Vagina (tissue), 2 donors: ENCODE measurements at regions of chr9 and their contacts with region 1.

Region 1: DNA sequence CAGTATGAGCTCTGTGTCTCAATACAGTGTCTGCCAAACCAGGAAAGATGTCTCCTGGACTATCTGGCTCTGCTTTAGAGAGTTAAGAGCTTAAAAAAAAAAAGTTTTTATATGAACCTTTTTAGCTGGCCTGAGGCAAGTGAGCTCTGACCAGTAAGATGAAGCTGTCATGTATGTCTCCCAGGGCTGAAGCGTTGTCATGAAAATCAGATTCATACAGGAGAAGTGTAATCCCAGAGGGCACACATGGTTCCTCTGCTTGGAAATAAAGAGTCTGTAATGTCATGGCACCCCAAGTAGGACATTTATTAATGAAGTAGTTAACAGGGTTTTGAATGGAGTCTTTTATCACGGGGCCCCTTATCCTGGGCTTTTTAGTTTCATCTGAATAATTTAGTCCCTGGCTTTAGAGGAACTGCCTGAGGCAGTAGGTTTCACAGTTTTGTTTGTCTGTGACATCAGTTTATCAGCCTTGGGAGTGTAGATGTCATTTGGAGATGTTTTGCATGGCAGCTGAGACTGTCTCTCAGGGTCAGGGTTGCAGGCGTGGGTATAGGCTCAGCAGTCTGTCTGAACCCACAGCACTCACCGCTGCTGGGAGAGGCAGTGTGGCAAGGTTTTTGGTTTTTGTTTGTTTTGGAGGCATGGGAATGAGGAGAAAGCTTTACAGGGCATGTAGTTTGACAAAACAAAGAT is 223.3 kb downstream of the DIRAS2 start:
- DNase-seq: no peak
- H3K4me3 ChIP-seq: no peak overlapping the region
- H3K27ac ChIP-seq: no peak overlapping the region
- H3K4me1 ChIP-seq: no peaks in the 10 kb centered on the region
- H3K27me3 ChIP-seq: no peaks in the 10 kb centered on the region
- CTCF ChIP-seq: no peak
- POLR2A ChIP-seq: no peak

Region 2: DNA sequence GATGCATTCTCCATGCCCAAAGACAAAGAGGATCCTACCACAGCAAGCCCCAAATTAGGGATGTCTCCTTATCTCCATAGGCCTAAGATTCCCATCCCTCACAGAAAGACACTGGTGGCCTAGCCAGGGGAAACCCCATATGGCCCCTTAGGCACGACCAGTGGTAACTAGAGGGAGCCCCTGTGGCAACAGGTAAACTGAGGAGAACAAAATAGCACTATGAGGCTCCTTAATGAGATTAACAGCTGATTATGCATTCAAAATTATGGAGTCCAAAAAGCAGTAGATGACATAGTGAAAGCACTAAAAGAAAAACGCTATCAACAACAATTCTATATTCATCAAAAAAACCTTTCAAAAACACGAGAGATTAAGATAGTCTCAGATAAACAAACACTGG is 10.7 kb before region 1 on chr9:
- intact Hi-C with region 1: loop called (anchors 1 kb)
- DNase-seq: no peak
- H3K4me3 ChIP-seq: no peak overlapping the region
- H3K27ac ChIP-seq: no peak overlapping the region
- H3K4me1 ChIP-seq: no peaks in the 10 kb centered on the region
- H3K27me3 ChIP-seq: no peaks in the 10 kb centered on the region
- CTCF ChIP-seq: no peak
- POLR2A ChIP-seq: no peak